ENCODE measurements at regions of chr15 and their contacts with region 1.

Region 1: DNA sequence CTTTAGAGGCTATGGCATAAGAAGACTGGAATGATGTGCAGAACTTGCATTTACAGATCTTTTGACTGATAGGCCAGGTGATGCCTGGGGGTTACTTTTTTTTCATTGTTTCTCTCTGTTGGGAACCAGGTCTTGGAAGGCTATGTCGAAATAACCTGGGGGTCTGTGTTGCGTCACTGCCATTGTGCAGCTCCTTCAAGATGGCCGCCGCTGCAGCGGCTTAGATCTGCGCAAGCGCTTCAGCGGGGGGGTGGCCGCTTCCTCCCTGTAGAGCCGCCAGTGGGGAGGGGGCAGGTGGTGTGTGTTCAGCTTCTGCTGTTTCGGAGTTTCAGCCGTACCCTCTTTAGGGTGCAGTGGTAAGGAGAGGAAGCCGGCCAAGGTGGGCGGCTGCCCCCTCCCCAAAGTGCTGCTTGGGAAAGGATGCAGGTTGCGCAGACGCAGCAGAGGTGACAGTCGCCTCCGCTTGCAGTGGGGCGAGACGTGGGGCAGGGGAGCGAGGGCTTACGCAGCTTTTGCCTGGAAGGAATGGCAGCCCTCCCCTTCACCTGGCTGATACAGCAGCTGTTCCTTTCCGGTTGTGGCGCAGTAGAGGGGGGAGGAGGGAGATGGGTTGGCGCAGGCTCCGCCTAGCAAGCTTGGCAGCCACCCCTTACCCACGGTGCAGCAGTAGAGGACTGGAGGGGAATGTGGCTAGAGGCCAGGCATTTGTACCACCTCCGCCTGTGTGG is 1.5 kb downstream of the SNRPN start:
- DNase-seq: peak; percentile 73
- ATAC-seq: peak; percentile 82 to 90 (median 86)
- H3K4me3 ChIP-seq: peak overlapping the region; percentile 33 to 86 (median 71)
- H3K27ac ChIP-seq: peak overlapping the region; percentile 66 to 95 (median 90)
- H3K4me1 ChIP-seq: peaks cover 0 to 5% (median 0%) of the 10 kb centered on the region in 9 donors
- H3K27me3 ChIP-seq: no peaks in the 10 kb centered on the region
- CTCF ChIP-seq: no peak

Region 2: GRCh38 chr15:25438601-25439368 is 482.5 kb after region 1 on chr15 and contains the start of gene UBE3A:
- intact Hi-C with region 1: loop called in 1 of 10 experiments (anchors 5 kb)
- DNase-seq: peak; percentile 89 to 94
- ATAC-seq: peak; percentile 97 to 99 (median 98)
- H3K4me3 ChIP-seq: peak within 1 kb of the TSS; percentile 71 to 100 (median 94)
- H3K27ac ChIP-seq: peak within 1 kb of the TSS; percentile 95 to 100 (median 99)
- H3K4me1 ChIP-seq: peaks cover 3 to 42% (median 30%) of the 10 kb centered on the region in 9 donors
- H3K27me3 ChIP-seq: no peaks in the 10 kb centered on the region
- CTCF ChIP-seq: peak in 7 of 9 donors; percentile 9 to 50 (median 32)
- total RNA-seq, gene UBE3A: 101 to 146 (median 112) TPM

Region 3: GRCh38 chr15:25450163-25450562 is 493.9 kb after region 1 on chr15:
- intact Hi-C with region 1: no loop called
- DNase-seq: no peak
- ATAC-seq: no peak
- H3K4me3 ChIP-seq: no peak overlapping the region
- H3K27ac ChIP-seq: no peak overlapping the region
- H3K4me1 ChIP-seq: no peaks in the 10 kb centered on the region
- H3K27me3 ChIP-seq: no peaks in the 10 kb centered on the region
- CTCF ChIP-seq: no peak

Region 4: DNA sequence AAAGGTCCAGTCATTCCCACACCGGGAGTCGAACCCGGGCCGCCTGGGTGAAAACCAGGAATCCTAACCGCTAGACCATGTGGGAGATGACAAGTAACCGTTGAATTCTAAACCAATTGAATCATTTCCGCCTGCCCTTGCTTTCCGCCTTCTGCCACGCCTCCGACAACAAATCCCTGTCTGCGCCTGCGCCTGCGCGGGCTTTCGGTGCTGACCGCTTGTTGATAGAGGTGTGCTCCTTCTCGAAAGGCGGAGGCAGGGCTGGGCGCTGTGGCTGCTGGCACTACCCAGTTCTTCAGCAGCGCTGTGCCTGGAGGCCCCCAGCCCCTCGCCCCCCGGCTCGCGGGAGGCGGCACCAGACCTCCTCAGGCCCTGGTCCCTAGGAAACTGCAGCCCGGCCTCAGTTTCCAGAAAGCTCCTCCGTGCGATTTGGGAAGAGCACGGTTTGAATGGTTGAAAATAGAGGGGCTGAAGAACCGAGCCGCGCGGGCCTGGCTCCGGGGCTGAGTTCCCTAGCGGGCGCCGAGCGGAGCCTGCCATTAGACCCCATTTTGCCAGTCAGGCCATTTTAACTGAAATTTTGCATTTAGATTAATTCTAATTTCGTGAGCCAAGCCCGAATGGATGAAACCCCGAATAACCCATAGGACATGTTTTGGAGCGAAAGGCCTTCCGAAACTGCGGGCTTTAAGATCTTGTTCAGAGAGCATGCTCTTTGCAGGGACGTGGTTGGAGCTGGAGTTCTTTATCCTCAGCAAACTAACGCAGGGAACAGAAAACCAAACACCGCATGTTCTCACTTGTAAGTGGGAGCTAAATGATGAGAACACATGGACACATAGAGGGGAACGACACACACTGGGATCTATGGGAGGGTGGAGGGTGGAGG is 1126.2 kb after region 1 on chr15:
- intact Hi-C with region 1: loop called in 1 of 10 experiments (anchors 10 kb)
- DNase-seq: peak; percentile 95 to 96
- ATAC-seq: peak; percentile 98 to 100 (median 99)
- H3K4me3 ChIP-seq: peak overlapping the region; percentile 53 to 98 (median 74)
- H3K27ac ChIP-seq: peak overlapping the region; percentile 44 to 93 (median 88)
- H3K4me1 ChIP-seq: peaks cover 0 to 16% (median 0%) of the 10 kb centered on the region in 9 donors
- H3K27me3 ChIP-seq: peaks cover 0 to 4% (median 0%) of the 10 kb centered on the region in 7 donors
- CTCF ChIP-seq: peak in 2 of 9 donors; percentile 7 to 9